ENCODE measurements at regions of chr4 and their contacts with region 1.

Region 1: GRCh38 chr4:22389240-22389870 is 126.5 kb downstream of the ADGRA3 start:
- DNase-seq: no peak
- ATAC-seq: peak; percentile 92
- H3K4me3 ChIP-seq: no peak overlapping the region
- H3K27ac ChIP-seq: no peak overlapping the region
- H3K4me1 ChIP-seq: no peaks in the 10 kb centered on the region
- H3K27me3 ChIP-seq: no peaks in the 10 kb centered on the region
- CTCF ChIP-seq: peak; percentile 67 to 71 (median 70)
- EP300 ChIP-seq: no peak
- POLR2A ChIP-seq: no peak
- RAD21 ChIP-seq: peak; percentile 82

Region 2: GRCh38 chr4:21827575-21827974 is 561.8 kb before region 1 on chr4:
- CTCF ChIA-PET with region 1: no interaction called
- POLR2A ChIA-PET with region 1: no interaction called
- RAD21 ChIA-PET with region 1: no interaction called
- SMC1A ChIA-PET with region 1: no interaction called
- in situ Hi-C with region 1: no loop called
- intact Hi-C with region 1: no loop called
- DNase-seq: no peak
- ATAC-seq: no peak
- H3K4me3 ChIP-seq: no peak overlapping the region
- H3K27ac ChIP-seq: no peak overlapping the region
- H3K4me1 ChIP-seq: no peaks in the 10 kb centered on the region
- H3K27me3 ChIP-seq: no peaks in the 10 kb centered on the region
- CTCF ChIP-seq: no peak
- EP300 ChIP-seq: no peak
- POLR2A ChIP-seq: no peak
- RAD21 ChIP-seq: no peak

Region 3: DNA sequence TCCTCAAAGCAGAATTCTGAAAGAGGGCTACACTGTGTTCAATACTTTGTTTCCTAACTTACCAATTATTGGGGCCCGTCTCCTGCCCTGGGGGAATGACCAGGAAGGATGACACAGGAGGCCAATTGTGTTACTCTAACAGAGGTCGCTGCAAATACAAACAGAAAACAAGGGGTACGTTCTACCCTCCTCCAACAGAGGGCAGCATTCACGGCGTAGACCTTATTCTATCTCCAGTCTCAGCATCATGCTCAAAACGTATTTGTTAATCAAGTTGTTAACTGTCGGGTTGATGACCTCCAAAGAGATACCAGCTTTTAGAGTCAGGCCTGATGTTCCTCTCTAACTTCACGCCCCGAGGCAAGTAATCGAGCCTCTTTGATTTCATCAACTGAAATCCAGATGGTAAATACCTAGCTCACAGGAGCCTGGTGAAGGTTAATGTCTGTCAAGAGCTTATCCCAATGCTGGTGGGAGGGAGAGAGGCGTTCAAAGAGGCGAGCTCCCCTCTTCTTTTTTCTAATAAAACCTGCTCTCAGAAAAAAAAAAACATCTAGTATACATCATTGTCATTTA is 259.8 kb before region 1 on chr4:
- CTCF ChIA-PET with region 1: interaction called, 12 read pairs
- POLR2A ChIA-PET with region 1: no interaction called
- RAD21 ChIA-PET with region 1: interaction called, 9 read pairs
- SMC1A ChIA-PET with region 1: interaction called, 4 read pairs
- in situ Hi-C with region 1: no loop called
- intact Hi-C with region 1: loop called (anchors 1 kb)
- DNase-seq: no peak
- ATAC-seq: peak; percentile 83
- H3K4me3 ChIP-seq: no peak overlapping the region
- H3K27ac ChIP-seq: no peak overlapping the region
- H3K4me1 ChIP-seq: no peaks in the 10 kb centered on the region
- H3K27me3 ChIP-seq: no peaks in the 10 kb centered on the region
- CTCF ChIP-seq: peak; percentile 14 to 53 (median 52); a peak in 4 of 6 replicates
- EP300 ChIP-seq: no peak
- POLR2A ChIP-seq: no peak
- RAD21 ChIP-seq: no peak

Region 4: GRCh38 chr4:22237155-22237751 is 152.1 kb before region 1 on chr4:
- CTCF ChIA-PET with region 1: interaction called, 23 read pairs
- POLR2A ChIA-PET with region 1: no interaction called
- RAD21 ChIA-PET with region 1: interaction called, 9 read pairs
- SMC1A ChIA-PET with region 1: interaction called, 17 read pairs
- in situ Hi-C with region 1: no loop called
- intact Hi-C with region 1: loop called (anchors 2 kb)
- DNase-seq: no peak
- ATAC-seq: peak; percentile 89
- H3K4me3 ChIP-seq: no peak overlapping the region
- H3K27ac ChIP-seq: no peak overlapping the region
- H3K4me1 ChIP-seq: no peaks in the 10 kb centered on the region
- H3K27me3 ChIP-seq: no peaks in the 10 kb centered on the region
- CTCF ChIP-seq: peak in 2 of 3 experiments; percentile 32 to 35; a peak in 2 of 6 replicates
- EP300 ChIP-seq: no peak
- POLR2A ChIP-seq: no peak
- RAD21 ChIP-seq: no peak

Region 5: DNA sequence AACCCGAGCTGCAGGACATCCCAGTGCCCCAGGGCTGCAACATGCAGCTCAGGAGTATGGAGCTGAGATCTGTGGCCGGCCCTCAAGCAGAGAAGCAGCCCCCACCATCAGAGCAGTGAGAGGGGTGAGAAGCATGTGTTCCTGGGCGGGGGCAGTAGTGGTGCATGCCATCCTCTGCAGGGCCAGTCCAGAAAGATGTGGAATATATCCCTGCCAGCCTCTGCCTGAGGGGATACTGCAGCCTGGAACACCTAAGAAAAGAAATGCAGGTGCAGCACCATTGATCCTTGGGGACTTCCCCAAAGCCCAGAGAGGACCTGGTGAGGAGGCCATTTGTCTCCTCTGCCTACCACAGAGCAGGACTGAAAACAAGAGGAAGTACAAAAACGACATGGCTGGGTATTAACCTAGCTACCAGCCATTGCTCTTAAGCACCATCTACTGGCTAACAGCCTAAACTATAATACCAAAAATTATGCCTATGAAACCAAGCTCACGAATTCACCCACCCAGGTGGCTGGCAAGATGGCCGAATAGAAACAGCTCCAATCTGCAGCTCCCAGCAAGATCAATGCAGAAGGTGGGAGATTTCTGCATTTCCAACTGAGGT is 32.3 kb before region 1 on chr4:
- CTCF ChIA-PET with region 1: interaction called, 21 read pairs
- POLR2A ChIA-PET with region 1: no interaction called
- RAD21 ChIA-PET with region 1: interaction called, 6 read pairs
- SMC1A ChIA-PET with region 1: interaction called, 8 read pairs
- in situ Hi-C with region 1: no loop called
- intact Hi-C with region 1: no loop called
- DNase-seq: no peak
- ATAC-seq: peak; percentile 98
- H3K4me3 ChIP-seq: no peak overlapping the region
- H3K27ac ChIP-seq: no peak overlapping the region
- H3K4me1 ChIP-seq: no peaks in the 10 kb centered on the region
- H3K27me3 ChIP-seq: no peaks in the 10 kb centered on the region
- CTCF ChIP-seq: peak in 2 of 3 experiments; percentile 23 to 43; a peak in 3 of 6 replicates
- EP300 ChIP-seq: no peak
- POLR2A ChIP-seq: no peak
- RAD21 ChIP-seq: peak; percentile 11; the same call in 1 of the 2 replicates

Region 6: DNA sequence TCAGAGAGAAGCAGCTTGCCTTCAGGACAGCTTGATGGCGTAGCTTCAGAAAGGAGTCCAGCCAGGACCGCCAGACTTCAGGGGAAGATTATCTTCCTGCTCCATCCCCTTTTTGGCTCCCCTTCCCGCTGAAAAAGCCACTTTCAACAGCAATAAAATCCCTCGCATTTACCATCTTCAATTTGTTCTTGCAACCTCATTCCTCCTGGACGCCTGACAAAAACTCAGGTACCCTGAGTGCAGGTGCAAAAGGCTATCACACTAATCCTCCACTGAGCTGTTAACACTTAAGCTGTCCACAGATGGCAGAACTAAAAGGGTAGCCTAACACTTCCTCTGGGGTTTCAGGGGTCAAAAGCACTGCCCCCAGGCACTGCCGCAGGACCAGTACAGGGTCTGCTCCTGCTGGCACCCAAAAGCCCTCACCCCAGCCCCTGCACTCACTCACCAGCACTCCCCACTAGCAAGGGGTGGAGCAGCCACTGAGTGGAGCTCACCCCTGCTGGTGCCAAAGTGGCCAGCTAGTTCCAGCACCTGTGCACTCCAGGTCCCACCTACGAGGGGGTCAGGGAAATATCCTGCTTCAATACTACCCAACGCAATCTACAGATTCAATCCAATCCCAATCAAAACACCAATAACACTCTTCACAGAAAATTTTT is 19.3 kb before region 1 on chr4:
- CTCF ChIA-PET with region 1: interaction called, 15 read pairs
- POLR2A ChIA-PET with region 1: no interaction called
- RAD21 ChIA-PET with region 1: interaction called, 3 read pairs
- SMC1A ChIA-PET with region 1: interaction called, 7 read pairs
- in situ Hi-C with region 1: no loop called
- intact Hi-C with region 1: no loop called
- DNase-seq: no peak
- ATAC-seq: no peak; the same call in 2 of the 3 replicates
- H3K4me3 ChIP-seq: no peak overlapping the region
- H3K27ac ChIP-seq: no peak overlapping the region
- H3K4me1 ChIP-seq: no peaks in the 10 kb centered on the region
- H3K27me3 ChIP-seq: no peaks in the 10 kb centered on the region
- CTCF ChIP-seq: no peak
- EP300 ChIP-seq: no peak
- POLR2A ChIP-seq: no peak
- RAD21 ChIP-seq: no peak

Region 7: GRCh38 chr4:22688236-22688635 is 298.9 kb after region 1 on chr4:
- CTCF ChIA-PET with region 1: interaction called, 31 read pairs
- POLR2A ChIA-PET with region 1: no interaction called
- RAD21 ChIA-PET with region 1: interaction called, 3 read pairs
- SMC1A ChIA-PET with region 1: interaction called, 3 read pairs
- in situ Hi-C with region 1: no loop called
- intact Hi-C with region 1: no loop called
- DNase-seq: no peak
- ATAC-seq: no peak
- H3K4me3 ChIP-seq: no peak overlapping the region
- H3K27ac ChIP-seq: no peak overlapping the region
- H3K4me1 ChIP-seq: no peaks in the 10 kb centered on the region
- H3K27me3 ChIP-seq: no peaks in the 10 kb centered on the region
- CTCF ChIP-seq: no peak
- EP300 ChIP-seq: no peak
- POLR2A ChIP-seq: no peak
- RAD21 ChIP-seq: no peak